ENCODE measurements at regions of chr5 and their contacts with region 1.

Region 1: DNA sequence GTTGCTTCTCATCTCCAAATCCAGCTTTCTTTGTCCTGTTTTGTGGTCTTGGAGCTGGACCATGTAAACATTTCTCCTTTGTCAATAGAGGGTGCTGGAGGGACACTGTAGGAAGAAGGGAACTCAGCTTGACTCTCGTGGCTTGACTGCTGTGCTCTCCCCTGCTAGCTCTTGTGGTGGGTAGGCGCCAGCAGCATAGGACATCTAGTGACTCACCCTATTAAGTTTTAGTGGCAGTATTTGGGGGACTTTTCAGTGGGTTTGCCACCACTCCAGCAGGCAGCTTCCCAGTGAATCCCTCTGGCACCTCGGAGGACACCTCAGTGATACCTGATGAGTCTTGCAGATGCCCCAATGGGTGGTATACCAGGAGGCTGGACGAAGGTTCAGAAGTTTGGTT is 97.8 kb downstream of the TSSK1B start:
- DNase-seq: no peak
- H3K4me3 Mint-ChIP-seq: no peak overlapping the region
- H3K27ac Mint-ChIP-seq: no peak overlapping the region
- H3K4me1 Mint-ChIP-seq: peaks cover 16% of the 10 kb centered on the region
- H3K27me3 Mint-ChIP-seq: peaks cover 22% of the 10 kb centered on the region

Region 2: GRCh38 chr5:113378959-113379541 is 42.1 kb after region 1 on chr5:
- intact Hi-C with region 1: loop called (anchors 5 kb)
- DNase-seq: peak; percentile 46
- H3K4me3 Mint-ChIP-seq: peak overlapping the region; percentile 3
- H3K27ac Mint-ChIP-seq: no peak overlapping the region
- H3K4me1 Mint-ChIP-seq: peaks cover 37% of the 10 kb centered on the region
- H3K27me3 Mint-ChIP-seq: peaks cover 25% of the 10 kb centered on the region